ENCODE measurements at regions of chr17 and their contacts with region 1.

Region 1: GRCh38 chr17:75749545-75750389 is 15.2 kb downstream of the GALK1 start:
- DNase-seq: peak; percentile 67
- ATAC-seq: peak; percentile 59
- H3K4me3 ChIP-seq: peak overlapping the region in 1 of 3 experiments; percentile 64; a peak in 1 of 6 replicates
- H3K27ac ChIP-seq: no peak overlapping the region
- H3K4me1 ChIP-seq: peaks cover 46% of the 10 kb centered on the region
- H3K27me3 ChIP-seq: no peaks in the 10 kb centered on the region
- CTCF ChIP-seq: peak; percentile 98
- EP300 ChIP-seq: no peak
- POLR2A ChIP-seq: no peak
- RAD21 ChIP-seq: peak; percentile 93

Region 2: GRCh38 chr17:75614006-75614405 is 135.8 kb before region 1 on chr17:
- CTCF ChIA-PET with region 1: no interaction called
- POLR2A ChIA-PET with region 1: interaction called, 10 read pairs
- in situ Hi-C with region 1: loop called (anchors 10 kb)
- intact Hi-C with region 1: loop called (anchors 5 kb)
- DNase-seq: no peak
- ATAC-seq: peak; percentile 62
- H3K4me3 ChIP-seq: no peak overlapping the region
- H3K27ac ChIP-seq: no peak overlapping the region
- H3K4me1 ChIP-seq: peaks cover 45% of the 10 kb centered on the region
- H3K27me3 ChIP-seq: no peaks in the 10 kb centered on the region; a peak in 1 of 5 replicates
- CTCF ChIP-seq: peak; percentile 78
- EP300 ChIP-seq: no peak
- POLR2A ChIP-seq: no peak
- RAD21 ChIP-seq: peak; percentile 60

Region 3: DNA sequence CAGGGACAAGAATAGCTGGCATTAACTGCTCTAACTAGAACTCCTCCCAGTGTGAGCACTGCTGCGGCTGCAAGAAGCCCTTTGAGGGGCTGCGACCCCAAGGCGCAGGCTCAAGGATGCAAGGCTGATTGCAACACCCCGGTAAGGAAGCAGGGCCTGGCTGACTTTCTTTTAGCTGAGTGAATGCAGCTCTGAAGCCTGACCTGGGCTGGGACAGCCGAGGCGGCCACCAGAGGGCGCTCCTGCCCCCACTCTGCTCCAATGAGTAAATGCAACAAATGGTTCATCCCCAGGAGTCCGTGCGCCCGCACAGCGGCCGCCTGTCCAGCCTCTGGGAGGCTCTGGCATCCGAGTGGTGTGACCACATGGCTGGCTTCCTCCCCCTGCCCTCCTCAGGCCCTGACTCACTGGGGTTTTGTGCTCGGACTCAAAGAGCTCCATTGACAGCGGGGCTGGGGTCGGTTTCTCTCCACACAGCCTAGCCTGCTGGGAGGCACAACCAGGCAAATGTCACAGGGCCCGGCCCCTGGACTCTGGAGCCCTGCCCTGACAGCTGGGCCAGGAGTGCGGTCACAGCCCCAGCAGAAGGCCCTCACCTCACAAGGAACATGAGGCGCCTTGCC is 116.8 kb before region 1 on chr17 and contains the start of gene SMIM5:
- CTCF ChIA-PET with region 1: interaction called, 102 read pairs
- POLR2A ChIA-PET with region 1: interaction called, 20 read pairs
- in situ Hi-C with region 1: no loop called
- intact Hi-C with region 1: loop called (anchors 1 kb)
- DNase-seq: peak; percentile 74
- ATAC-seq: peak; percentile 87
- H3K4me3 ChIP-seq: peak within 1 kb of the TSS in 2 of 3 experiments; percentile 21 to 59; a peak in 2 of 6 replicates
- H3K27ac ChIP-seq: peak within 1 kb of the TSS; percentile 50
- H3K4me1 ChIP-seq: peaks cover 19% of the 10 kb centered on the region
- H3K27me3 ChIP-seq: no peaks in the 10 kb centered on the region
- CTCF ChIP-seq: peak; percentile 97
- EP300 ChIP-seq: no peak
- POLR2A ChIP-seq: no peak
- RAD21 ChIP-seq: peak; percentile 93
- total RNA-seq, gene SMIM5: not detected in 2 replicates

Region 4: DNA sequence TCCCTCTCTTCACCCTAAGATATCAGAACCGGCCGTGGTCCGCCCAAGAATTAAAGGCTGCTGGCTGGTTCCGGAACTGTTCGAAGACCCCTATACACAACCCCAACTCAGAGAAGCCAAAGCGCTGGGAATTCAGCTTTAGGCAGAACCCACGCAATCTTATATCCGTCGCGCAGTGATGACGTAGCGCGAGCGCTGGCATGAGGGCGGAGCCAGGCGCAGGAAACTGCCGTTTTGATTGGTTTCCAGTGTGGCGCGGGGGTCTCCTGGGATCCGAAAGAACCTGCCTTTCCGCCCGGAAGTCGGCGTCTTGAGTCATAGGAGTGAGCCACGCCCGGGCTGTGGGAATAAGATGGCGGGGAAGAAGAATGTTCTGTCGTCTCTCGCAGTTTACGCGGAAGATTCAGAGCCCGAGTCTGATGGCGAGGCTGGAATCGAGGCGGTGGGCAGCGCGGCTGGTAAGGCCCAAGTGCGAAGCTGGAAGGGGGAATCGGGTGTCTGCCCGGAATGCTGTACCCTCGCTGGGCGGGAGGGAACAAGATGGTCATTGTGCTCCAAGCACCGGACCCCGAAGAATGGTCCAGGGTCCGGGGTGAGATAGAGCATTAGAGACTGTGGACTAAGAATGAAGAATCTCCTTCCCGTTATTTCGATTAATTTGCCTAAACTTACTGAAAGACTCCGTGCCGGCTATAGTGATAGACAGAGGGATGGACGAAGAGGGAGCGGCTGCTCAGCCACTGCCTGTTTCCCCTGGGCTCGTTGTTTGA is 82.6 kb before region 1 on chr17 and contains the starts of genes RECQL5 and SAP30BP:
- CTCF ChIA-PET with region 1: no interaction called
- POLR2A ChIA-PET with region 1: interaction called, 11 read pairs
- in situ Hi-C with region 1: no loop called
- intact Hi-C with region 1: no loop called
- DNase-seq: peak; percentile 98
- ATAC-seq: peak; percentile 100
- H3K4me3 ChIP-seq: peak within 1 kb of the TSS; percentile 77 to 99 (median 99)
- H3K27ac ChIP-seq: peak within 1 kb of the TSS; percentile 73
- H3K4me1 ChIP-seq: peaks cover 39% of the 10 kb centered on the region
- H3K27me3 ChIP-seq: peaks cover 0 to 5% of the 10 kb centered on the region in 2 experiments; a peak in 1 of 5 replicates
- CTCF ChIP-seq: 0 out of 2 replicates have a peak, but pooled peaks have one; percentile 15
- EP300 ChIP-seq: 0 out of 4 replicates have a peak, but pooled peaks of 1 of the 2 experiments have one; percentile 28
- POLR2A ChIP-seq: peak; percentile 82 to 91
- RAD21 ChIP-seq: 0 out of 2 replicates have a peak, but pooled peaks have one; percentile 10
- total RNA-seq, gene RECQL5: 17.8 and 32.0 TPM in 2 replicates
- total RNA-seq, gene SAP30BP: 99.4 and 109 TPM in 2 replicates

Region 5: DNA sequence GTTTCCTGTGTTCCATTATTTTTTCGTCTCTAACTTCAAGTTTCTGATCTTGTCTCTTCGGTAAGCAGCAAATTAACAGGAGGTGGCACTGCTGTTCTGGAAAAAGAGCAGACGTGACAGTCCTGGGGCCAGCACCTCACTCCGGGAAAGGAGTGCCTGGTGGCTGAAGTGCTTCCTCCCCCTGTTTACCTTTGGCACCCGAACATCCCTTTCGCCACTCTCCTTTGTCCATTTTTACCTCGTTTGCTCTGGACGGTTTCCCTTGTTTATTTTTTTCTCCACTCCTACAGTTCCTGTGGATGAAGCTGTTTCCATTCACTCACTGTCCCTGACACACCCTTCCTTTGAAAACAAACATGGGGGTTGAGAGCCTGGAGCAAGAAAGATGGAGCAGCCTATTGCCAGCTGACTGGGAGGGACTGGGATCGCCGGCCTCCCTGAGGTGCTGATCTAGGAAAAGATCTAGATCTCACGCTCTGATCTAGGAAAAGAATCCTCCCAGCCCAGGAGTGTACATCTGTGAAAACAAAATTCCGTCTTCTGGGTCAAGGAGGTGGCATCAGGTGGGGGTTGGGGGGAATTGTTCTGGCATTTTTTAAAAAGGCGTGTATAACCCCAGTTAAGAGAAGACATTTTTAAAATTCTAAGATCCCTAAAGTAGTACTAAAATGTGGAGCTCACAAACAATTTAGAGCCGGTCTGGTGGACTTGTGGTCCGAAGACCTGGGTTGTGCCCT is 69.9 kb before region 1 on chr17:
- CTCF ChIA-PET with region 1: interaction called, 43 read pairs
- POLR2A ChIA-PET with region 1: interaction called, 6 read pairs
- in situ Hi-C with region 1: loop called (anchors 5 kb)
- intact Hi-C with region 1: loop called (anchors 1 kb)
- DNase-seq: no peak
- ATAC-seq: peak; percentile 24; the same call in 1 of the 3 replicates
- H3K4me3 ChIP-seq: no peak overlapping the region
- H3K27ac ChIP-seq: no peak overlapping the region
- H3K4me1 ChIP-seq: peaks cover 16% of the 10 kb centered on the region
- H3K27me3 ChIP-seq: no peaks in the 10 kb centered on the region
- CTCF ChIP-seq: peak; percentile 57
- EP300 ChIP-seq: no peak
- POLR2A ChIP-seq: no peak
- RAD21 ChIP-seq: no peak

Region 6: GRCh38 chr17:75771334-75772281 is 21.8 kb after region 1 on chr17:
- CTCF ChIA-PET with region 1: interaction called, 4 read pairs
- POLR2A ChIA-PET with region 1: interaction called, 116 read pairs
- in situ Hi-C with region 1: no loop called
- intact Hi-C with region 1: no loop called
- DNase-seq: peak; percentile 56
- ATAC-seq: peak; percentile 37
- H3K4me3 ChIP-seq: peak overlapping the region; percentile 37 to 58 (median 39); a peak in 5 of 6 replicates
- H3K27ac ChIP-seq: no peak overlapping the region
- H3K4me1 ChIP-seq: peaks cover 58% of the 10 kb centered on the region
- H3K27me3 ChIP-seq: no peaks in the 10 kb centered on the region
- CTCF ChIP-seq: peak; percentile 73
- EP300 ChIP-seq: peak in 1 of 2 experiments; percentile 15; a peak in 1 of 4 replicates
- POLR2A ChIP-seq: no peak; a peak in 1 of 4 replicates
- RAD21 ChIP-seq: no peak

Region 7: DNA sequence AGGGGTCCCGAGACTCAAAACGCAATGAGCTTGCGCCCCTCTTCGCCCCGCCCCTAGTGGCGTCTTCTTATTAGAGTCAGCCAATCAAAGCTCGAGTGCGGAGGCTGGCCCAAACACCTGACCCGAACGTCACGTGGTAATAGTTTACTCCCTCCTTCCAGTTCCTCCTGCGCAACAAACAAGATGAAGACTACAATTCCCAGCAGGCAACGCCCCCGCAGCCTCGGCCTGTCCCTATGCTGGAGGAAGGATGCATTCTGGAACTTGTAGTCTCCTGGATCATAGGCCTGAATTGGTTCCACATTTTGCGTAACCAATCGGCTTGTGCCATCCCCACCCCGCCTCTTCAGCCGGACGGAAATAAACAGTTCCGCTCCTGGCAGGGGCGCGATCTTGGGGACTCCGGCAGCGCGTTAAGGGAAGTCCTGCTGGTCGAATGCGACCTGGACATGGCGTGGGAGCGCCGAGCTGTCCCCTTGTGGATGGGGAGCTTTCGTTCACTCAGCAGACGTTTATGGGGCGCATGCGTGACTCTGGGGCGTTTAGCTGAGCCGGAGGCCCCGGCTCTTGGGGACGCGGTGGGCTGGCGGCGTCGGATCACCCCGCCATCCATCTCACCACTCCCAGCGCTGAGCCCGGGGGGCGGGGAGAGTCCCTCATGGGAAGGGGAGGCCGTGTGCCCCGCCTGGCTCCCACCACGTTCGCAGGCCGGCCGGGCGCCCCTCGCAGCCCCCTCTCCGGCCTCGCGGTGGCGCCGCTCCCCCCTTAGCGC is 105.7 kb after region 1 on chr17 and contains the start of gene WBP2:
- CTCF ChIA-PET with region 1: no interaction called
- POLR2A ChIA-PET with region 1: interaction called, 22 read pairs
- in situ Hi-C with region 1: no loop called
- intact Hi-C with region 1: no loop called
- DNase-seq: peak; percentile 100
- ATAC-seq: peak; percentile 92
- H3K4me3 ChIP-seq: peak within 1 kb of the TSS; percentile 81 to 90 (median 90)
- H3K27ac ChIP-seq: peak within 1 kb of the TSS; percentile 89
- H3K4me1 ChIP-seq: peaks cover 53% of the 10 kb centered on the region
- H3K27me3 ChIP-seq: no peaks in the 10 kb centered on the region; a peak in 1 of 5 replicates
- CTCF ChIP-seq: peak; percentile 80
- EP300 ChIP-seq: peak in 1 of 2 experiments; percentile 63; a peak in 2 of 4 replicates
- POLR2A ChIP-seq: peak; percentile 89 to 99
- RAD21 ChIP-seq: peak; percentile 90
- total RNA-seq, gene WBP2: 28.2 and 29.2 TPM in 2 replicates